Left colon (tissue), 2 donors: ENCODE measurements at regions of chr6 and their contacts with region 1.

Region 1: DNA sequence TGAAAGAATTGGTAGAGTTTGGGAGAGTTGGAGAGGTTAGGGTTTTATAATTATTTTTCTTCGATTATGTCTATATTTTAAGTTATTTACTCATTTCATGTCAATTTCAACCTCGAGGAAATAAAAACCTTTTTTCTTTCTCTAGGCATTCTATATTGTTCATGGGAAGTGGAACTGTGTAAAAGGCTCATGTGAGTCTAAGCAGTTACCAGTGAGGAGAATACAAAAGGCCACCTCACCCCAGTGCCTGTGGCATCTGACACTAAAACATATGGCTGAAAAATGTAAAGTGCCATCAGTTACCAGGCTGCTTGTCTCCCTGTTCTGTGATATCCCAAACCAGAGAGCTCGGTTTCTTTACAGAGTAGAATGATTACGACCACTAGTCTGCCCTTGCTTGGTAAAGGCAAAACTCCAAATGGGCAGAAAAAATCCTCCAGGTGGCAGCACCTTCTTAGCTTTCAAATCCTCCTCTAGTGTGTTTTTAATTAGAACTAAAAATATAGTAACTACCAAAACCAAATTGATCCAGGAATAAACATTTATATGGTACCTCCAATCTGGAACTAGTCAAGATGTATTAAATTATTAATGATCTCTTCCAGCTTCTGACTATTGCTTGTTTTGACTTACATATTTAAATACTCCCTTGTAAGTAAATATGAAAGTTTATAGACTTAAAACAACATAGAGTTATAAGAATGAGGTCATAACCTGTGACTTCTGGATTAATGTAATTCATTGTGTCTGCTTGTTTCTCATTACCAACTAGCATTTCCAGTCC is 122.6 kb upstream of the MCHR2 start:
- DNase-seq: peak in 1 of 2 donors; percentile 24
- ATAC-seq: no peak

Region 2: GRCh38 chr6:99967052-99967451 is 149.6 kb before region 1 on chr6:
- intact Hi-C with region 1: no loop called
- DNase-seq: no peak
- ATAC-seq: no peak

Region 3: DNA sequence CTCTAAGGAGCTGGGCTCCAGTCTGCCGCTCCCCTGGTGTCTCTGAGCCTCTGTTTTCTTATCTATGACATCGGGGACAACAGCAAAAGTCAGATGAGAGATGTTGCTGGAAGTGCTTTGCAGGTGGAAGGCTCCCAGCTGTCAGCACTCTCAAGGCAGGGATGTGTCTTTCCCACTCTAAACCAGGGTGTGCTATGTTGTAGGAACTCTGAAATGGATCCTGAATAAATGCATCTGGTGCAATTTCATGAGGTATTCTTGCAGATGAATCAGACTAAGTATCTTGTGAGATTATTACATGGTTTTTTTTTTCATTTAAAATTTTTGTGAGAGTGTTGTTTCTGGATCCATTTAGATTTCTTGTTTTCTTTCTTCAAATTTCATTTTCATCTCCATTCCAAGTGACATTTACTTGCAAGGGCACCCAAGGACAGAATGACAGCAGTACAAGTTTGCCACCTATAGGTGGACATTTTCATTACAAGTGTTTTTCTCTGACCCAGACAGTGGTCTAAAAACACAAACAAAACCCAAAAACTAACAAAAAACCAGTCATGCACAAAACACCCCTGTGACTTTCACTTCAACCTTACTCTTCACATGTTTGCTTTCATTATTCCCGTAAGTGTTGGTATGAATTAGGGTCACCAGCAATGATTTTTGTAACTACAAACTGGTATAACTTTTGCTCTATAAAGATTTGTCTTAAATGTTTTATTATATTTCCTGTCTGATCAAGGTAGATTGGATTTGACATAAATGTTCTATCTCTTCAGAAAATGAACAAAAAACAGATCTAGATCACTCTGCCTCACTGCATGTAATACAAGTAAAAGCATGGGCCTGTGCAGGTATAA is 362.8 kb after region 1 on chr6:
- intact Hi-C with region 1: loop called in 1 of 2 experiments (anchors 5 kb)
- DNase-seq: no peak
- ATAC-seq: peak; percentile 58

Region 4: GRCh38 chr6:100657678-100658330 is 541.2 kb after region 1 on chr6:
- intact Hi-C with region 1: loop called in 1 of 2 experiments (anchors 10 kb)
- DNase-seq: no peak
- ATAC-seq: no peak